ENCODE measurements at regions of chr1 and their contacts with region 1.

Region 1: GRCh38 chr1:98749152-98749756 is 87.7 kb downstream of the SNX7 start:
- DNase-seq: no peak
- ATAC-seq: no peak
- H3K4me3 Mint-ChIP-seq: no peak overlapping the region
- H3K27ac Mint-ChIP-seq: no peak overlapping the region
- H3K4me1 Mint-ChIP-seq: no peaks in the 10 kb centered on the region
- H3K27me3 Mint-ChIP-seq: no peaks in the 10 kb centered on the region
- CTCF ChIP-seq: no peak

Region 2: DNA sequence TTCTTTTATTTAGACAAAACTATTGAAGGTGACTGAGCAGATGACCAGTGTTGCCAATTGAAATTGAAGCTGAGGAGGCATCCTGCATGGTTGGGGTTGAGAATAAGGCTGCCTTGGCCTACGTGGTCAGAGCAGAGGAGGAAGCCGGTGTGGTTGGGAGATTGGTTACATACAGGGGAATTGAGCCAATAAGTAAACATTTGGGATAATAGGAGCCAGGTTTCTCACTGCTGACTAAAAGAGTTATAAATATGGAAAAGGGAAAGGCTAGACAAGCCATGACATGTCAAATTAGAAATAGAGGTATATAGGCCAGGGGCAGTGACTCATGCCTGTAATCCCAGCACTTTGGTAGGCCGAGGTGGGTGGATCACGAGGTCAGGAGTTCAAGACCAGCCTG is 72.0 kb before region 1 on chr1:
- CTCF ChIA-PET with region 1: no interaction called
- POLR2A ChIA-PET with region 1: no interaction called
- intact Hi-C with region 1: no loop called
- DNase-seq: no peak
- ATAC-seq: no peak
- H3K4me3 Mint-ChIP-seq: no peak overlapping the region
- H3K27ac Mint-ChIP-seq: no peak overlapping the region
- H3K4me1 Mint-ChIP-seq: no peaks in the 10 kb centered on the region
- H3K27me3 Mint-ChIP-seq: no peaks in the 10 kb centered on the region
- CTCF ChIP-seq: no peak

Region 3: DNA sequence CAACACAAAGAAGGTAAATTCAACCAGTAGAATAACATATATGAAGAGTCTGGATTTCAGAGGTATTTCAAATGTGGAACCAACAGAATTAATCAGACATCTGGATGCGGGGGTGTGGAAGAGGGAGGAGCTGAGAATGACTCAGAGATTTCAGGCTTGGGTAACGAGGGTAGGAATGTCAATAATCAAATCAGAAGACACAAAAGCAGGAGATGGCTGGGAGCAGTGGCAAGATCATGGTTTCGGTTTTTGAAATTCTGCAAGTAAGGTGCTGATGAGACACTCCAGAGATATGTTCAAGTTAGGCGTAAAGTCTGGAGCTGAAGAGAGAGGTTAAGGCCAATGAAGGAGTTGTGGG is 191.4 kb after region 1 on chr1:
- CTCF ChIA-PET with region 1: no interaction called
- POLR2A ChIA-PET with region 1: no interaction called
- intact Hi-C with region 1: loop called (anchors 5 kb)
- DNase-seq: no peak
- ATAC-seq: no peak
- H3K4me3 Mint-ChIP-seq: no peak overlapping the region
- H3K27ac Mint-ChIP-seq: no peak overlapping the region
- H3K4me1 Mint-ChIP-seq: no peaks in the 10 kb centered on the region
- H3K27me3 Mint-ChIP-seq: no peaks in the 10 kb centered on the region
- CTCF ChIP-seq: no peak

Region 4: DNA sequence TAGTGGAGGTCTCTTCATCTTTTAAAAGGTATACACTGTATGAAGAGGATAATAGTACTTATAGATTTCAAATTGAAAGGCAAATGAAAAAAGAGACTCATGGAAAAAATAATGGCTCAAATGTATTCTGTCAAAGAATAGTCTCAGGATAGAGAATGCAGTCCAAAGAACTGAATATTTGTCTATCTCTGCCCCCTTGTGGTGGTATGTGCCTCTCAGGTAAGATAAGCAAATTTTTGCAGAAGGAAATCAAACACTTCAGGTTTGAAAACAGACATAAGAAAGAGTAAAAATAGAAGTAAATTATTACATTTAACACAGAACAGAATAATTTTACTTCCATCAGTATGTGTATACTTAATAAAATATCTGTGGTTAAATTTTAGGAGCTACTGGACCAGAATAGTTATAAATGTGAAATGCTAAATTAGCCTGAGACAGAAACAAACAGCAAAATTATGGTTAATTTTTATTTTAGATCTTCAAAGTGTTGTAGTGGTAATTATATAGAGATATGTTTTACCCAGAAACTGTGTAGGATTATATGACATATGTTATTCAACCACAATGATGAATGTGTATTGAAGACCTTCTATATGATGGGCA is 732.2 kb after region 1 on chr1:
- CTCF ChIA-PET with region 1: interaction called, 7 read pairs
- POLR2A ChIA-PET with region 1: no interaction called
- intact Hi-C with region 1: loop called (anchors 2 kb)
- DNase-seq: no peak
- ATAC-seq: no peak
- H3K4me3 Mint-ChIP-seq: no peak overlapping the region
- H3K27ac Mint-ChIP-seq: no peak overlapping the region
- H3K4me1 Mint-ChIP-seq: no peaks in the 10 kb centered on the region
- H3K27me3 Mint-ChIP-seq: no peaks in the 10 kb centered on the region
- CTCF ChIP-seq: peak; percentile 62

Measured in activated B cell treated with CpG ODN at 0.5 μM for 24 hours (primary cell).